Heart right ventricle (tissue), 16 donors: ENCODE measurements at regions of chr15 and their contacts with region 1.

Region 1: GRCh38 chr15:83747050-83747717 is 93.3 kb downstream of the ADAMTSL3 start:
- DNase-seq: peak in 1 of 2 donors; percentile 49
- ATAC-seq: peak; percentile 66 to 90 (median 83)
- H3K4me3 ChIP-seq: peak overlapping the region in 6 of 10 donors; percentile 15 to 27 (median 21)
- H3K27ac ChIP-seq: peak overlapping the region in 8 of 10 donors; percentile 7 to 67 (median 50)
- H3K4me1 ChIP-seq: peaks cover 0 to 20% (median 15%) of the 10 kb centered on the region in 9 donors
- H3K27me3 ChIP-seq: no peaks in the 10 kb centered on the region
- CTCF ChIP-seq: peak in 7 of 9 donors; percentile 18 to 61 (median 40)

Region 2: GRCh38 chr15:83446904-83447709 is 300.1 kb before region 1 on chr15 and contains the start of gene SH3GL3:
- intact Hi-C with region 1: loop called in 1 of 10 experiments (anchors 10 kb)
- DNase-seq: peak; percentile 74 to 77
- ATAC-seq: peak; percentile 92 to 99 (median 96)
- H3K4me3 ChIP-seq: peak within 1 kb of the TSS; percentile 2 to 56 (median 50)
- H3K27ac ChIP-seq: no peak within 1 kb of the TSS
- H3K4me1 ChIP-seq: peaks cover 0 to 13% (median 8%) of the 10 kb centered on the region in 9 donors
- H3K27me3 ChIP-seq: peaks cover 0 to 53% (median 28%) of the 10 kb centered on the region in 7 donors
- CTCF ChIP-seq: peak in 5 of 9 donors; percentile 19 to 49 (median 35)
- total RNA-seq, gene SH3GL3: 0.13 to 0.17 TPM in 2 of 10 donors, not detected in the others

Region 3: GRCh38 chr15:83564975-83565532 is 182.1 kb before region 1 on chr15:
- intact Hi-C with region 1: loop called in 8 of 10 experiments (anchors 2 to 10 kb)
- DNase-seq: no peak
- ATAC-seq: no peak
- H3K4me3 ChIP-seq: no peak overlapping the region
- H3K27ac ChIP-seq: no peak overlapping the region
- H3K4me1 ChIP-seq: no peaks in the 10 kb centered on the region
- H3K27me3 ChIP-seq: no peaks in the 10 kb centered on the region
- CTCF ChIP-seq: no peak

Region 4: GRCh38 chr15:83582381-83582780 is 164.8 kb before region 1 on chr15:
- intact Hi-C with region 1: loop called in 3 of 10 experiments (anchors 10 kb)
- DNase-seq: no peak
- ATAC-seq: no peak
- H3K4me3 ChIP-seq: no peak overlapping the region
- H3K27ac ChIP-seq: no peak overlapping the region
- H3K4me1 ChIP-seq: no peaks in the 10 kb centered on the region
- H3K27me3 ChIP-seq: no peaks in the 10 kb centered on the region
- CTCF ChIP-seq: no peak

Region 5: GRCh38 chr15:83837945-83838571 is 90.9 kb after region 1 on chr15:
- intact Hi-C with region 1: loop called in 2 of 10 experiments (anchors 10 kb)
- DNase-seq: peak in 1 of 2 donors; percentile 48
- ATAC-seq: peak in 2 of 8 donors; percentile 47 to 56
- H3K4me3 ChIP-seq: no peak overlapping the region
- H3K27ac ChIP-seq: no peak overlapping the region
- H3K4me1 ChIP-seq: peaks cover 0 to 22% (median 8%) of the 10 kb centered on the region in 9 donors
- H3K27me3 ChIP-seq: no peaks in the 10 kb centered on the region
- CTCF ChIP-seq: peak in 8 of 9 donors; percentile 31 to 60 (median 50)

Region 6: GRCh38 chr15:84023636-84024035 is 276.5 kb after region 1 on chr15:
- intact Hi-C with region 1: loop called in 1 of 10 experiments (anchors 10 kb)
- DNase-seq: peak in 1 of 2 donors; percentile 24
- ATAC-seq: peak in 1 of 8 donors; percentile 52
- H3K4me3 ChIP-seq: no peak overlapping the region
- H3K27ac ChIP-seq: no peak overlapping the region
- H3K4me1 ChIP-seq: no peaks in the 10 kb centered on the region
- H3K27me3 ChIP-seq: no peaks in the 10 kb centered on the region
- CTCF ChIP-seq: peak; percentile 34 to 69 (median 61)